Caco-2 (cell line): ENCODE measurements at regions of chr3 and their contacts with region 1.

Region 1: DNA sequence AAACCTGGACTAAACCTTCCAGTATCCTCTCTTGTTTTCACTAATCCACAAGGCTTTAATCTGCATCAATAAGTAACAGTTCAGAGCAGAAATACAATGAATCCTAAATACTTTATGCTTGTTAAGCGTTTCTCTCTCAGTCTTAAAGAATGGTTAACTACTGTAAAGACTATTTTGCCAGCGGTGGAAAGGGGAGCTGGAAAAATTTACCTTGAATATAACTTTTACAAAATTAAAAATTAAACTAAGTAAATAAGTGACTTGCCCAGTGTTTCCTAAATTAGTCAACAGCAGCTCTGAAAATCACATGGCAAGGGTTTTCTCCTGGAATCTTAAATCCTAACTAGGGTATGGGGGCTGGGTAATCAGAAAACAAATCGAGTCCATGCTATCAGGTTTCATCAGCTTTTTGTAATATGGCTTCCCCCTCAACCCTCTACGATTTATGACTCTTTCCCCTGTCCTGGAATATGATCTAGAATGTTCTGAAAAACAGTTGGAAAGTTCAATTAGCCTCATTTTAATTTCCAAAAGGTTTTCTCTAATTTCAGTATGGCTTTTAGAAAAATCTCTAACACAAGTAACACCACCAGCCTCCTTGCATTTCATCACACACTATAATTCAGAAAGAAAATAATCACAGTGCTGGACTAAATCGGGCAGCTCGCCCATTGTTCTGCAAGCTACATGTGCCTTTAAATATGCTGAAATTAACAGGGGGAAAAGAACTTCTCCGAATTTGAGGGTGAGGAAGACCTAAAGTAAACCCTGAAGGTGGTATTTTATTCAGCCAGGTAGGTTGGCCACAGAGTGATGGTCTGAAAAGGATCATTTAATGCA is 133.5 kb downstream of the ADAMTS9 start:
- DNase-seq: no peak
- H3K4me3 ChIP-seq: no peak overlapping the region
- H3K4me3 Mint-ChIP-seq: no peak overlapping the region
- H3K27ac Mint-ChIP-seq: no peak overlapping the region
- H3K4me1 ChIP-seq: peaks cover 29% of the 10 kb centered on the region
- H3K4me1 Mint-ChIP-seq: peaks cover 23% of the 10 kb centered on the region
- H3K27me3 ChIP-seq: no peaks in the 10 kb centered on the region
- H3K27me3 Mint-ChIP-seq: peaks cover 3% of the 10 kb centered on the region
- CTCF ChIP-seq: no peak

Region 2: DNA sequence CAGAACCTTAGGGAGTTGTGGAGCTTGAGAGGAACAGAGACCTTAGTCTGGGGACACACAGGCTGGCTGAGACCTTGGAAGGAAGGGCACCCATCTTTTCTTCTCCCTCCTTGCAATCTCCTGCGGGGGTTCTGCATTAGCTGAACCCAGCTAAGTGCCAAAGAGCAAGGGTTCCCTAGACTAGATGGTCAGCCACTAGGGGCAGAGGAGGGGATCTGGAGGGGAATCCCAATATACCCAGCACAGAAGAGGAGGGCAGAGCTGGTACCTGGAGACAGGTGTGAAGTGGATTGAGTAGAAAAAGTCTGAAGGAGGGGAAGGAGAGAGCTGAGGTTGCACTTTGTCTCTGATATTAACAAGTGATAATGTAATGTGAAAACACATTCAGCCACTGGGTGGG is 79.3 kb before region 1 on chr3:
- CTCF ChIA-PET with region 1: no interaction called
- POLR2A ChIA-PET with region 1: no interaction called
- intact Hi-C with region 1: no loop called
- DNase-seq: no peak
- H3K4me3 ChIP-seq: no peak overlapping the region
- H3K4me3 Mint-ChIP-seq: no peak overlapping the region
- H3K27ac Mint-ChIP-seq: no peak overlapping the region
- H3K4me1 ChIP-seq: no peaks in the 10 kb centered on the region
- H3K4me1 Mint-ChIP-seq: no peaks in the 10 kb centered on the region
- H3K27me3 ChIP-seq: no peaks in the 10 kb centered on the region
- H3K27me3 Mint-ChIP-seq: peaks cover 3% of the 10 kb centered on the region
- CTCF ChIP-seq: no peak

Region 3: GRCh38 chr3:64501298-64501906 is 52.9 kb before region 1 on chr3:
- CTCF ChIA-PET with region 1: no interaction called
- POLR2A ChIA-PET with region 1: no interaction called
- intact Hi-C with region 1: loop called (anchors 1 kb)
- DNase-seq: peak; percentile 67 to 71
- H3K4me3 ChIP-seq: no peak overlapping the region
- H3K4me3 Mint-ChIP-seq: peak overlapping the region; percentile 22
- H3K27ac Mint-ChIP-seq: no peak overlapping the region
- H3K4me1 ChIP-seq: peaks cover 24% of the 10 kb centered on the region
- H3K4me1 Mint-ChIP-seq: peaks cover 24% of the 10 kb centered on the region
- H3K27me3 ChIP-seq: no peaks in the 10 kb centered on the region
- H3K27me3 Mint-ChIP-seq: peaks cover 8% of the 10 kb centered on the region
- CTCF ChIP-seq: no peak

Region 4: DNA sequence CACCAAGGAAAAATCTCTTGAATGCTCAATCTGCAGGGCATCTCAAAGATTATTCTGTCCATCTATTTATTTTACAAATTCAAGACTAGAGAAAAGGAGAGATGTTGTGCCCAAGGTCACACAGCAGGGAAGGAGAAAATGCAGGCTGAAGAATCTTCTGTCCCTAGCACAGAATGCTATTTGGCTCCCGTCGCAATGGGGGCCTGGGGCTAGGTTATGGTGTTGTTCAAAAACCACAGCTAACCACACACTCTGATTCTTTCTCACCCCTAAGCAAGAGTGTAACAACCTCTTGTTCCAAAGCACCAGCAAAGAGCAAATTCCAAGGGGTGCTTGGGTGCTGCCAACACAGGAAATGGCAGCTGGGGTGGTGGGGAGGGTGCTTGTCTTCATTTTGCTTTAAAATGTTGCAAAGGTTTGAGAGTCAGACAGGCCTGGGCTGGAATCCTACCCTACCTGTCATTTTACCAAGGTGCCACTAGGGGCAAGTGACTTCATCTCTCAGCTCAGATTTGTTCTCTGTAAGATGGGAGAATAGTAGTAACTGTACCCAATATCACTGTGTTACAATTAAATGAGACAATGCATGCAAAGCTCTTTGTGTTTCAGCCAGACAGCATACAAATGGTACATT is 21.0 kb after region 1 on chr3:
- CTCF ChIA-PET with region 1: no interaction called
- POLR2A ChIA-PET with region 1: no interaction called
- intact Hi-C with region 1: loop called (anchors 1 kb)
- DNase-seq: peak in 1 of 2 experiments; percentile 22
- H3K4me3 ChIP-seq: no peak overlapping the region
- H3K4me3 Mint-ChIP-seq: no peak overlapping the region
- H3K27ac Mint-ChIP-seq: no peak overlapping the region
- H3K4me1 ChIP-seq: peaks cover 19% of the 10 kb centered on the region
- H3K4me1 Mint-ChIP-seq: peaks cover 14% of the 10 kb centered on the region
- H3K27me3 ChIP-seq: no peaks in the 10 kb centered on the region
- H3K27me3 Mint-ChIP-seq: no peaks in the 10 kb centered on the region
- CTCF ChIP-seq: peak; percentile 52 to 63

Region 5: GRCh38 chr3:64595253-64595694 is 41.0 kb after region 1 on chr3:
- CTCF ChIA-PET with region 1: no interaction called
- POLR2A ChIA-PET with region 1: no interaction called
- intact Hi-C with region 1: no loop called
- DNase-seq: no peak
- H3K4me3 ChIP-seq: no peak overlapping the region
- H3K4me3 Mint-ChIP-seq: no peak overlapping the region
- H3K27ac Mint-ChIP-seq: no peak overlapping the region
- H3K4me1 ChIP-seq: no peaks in the 10 kb centered on the region
- H3K4me1 Mint-ChIP-seq: no peaks in the 10 kb centered on the region
- H3K27me3 ChIP-seq: no peaks in the 10 kb centered on the region
- H3K27me3 Mint-ChIP-seq: no peaks in the 10 kb centered on the region
- CTCF ChIP-seq: no peak

Region 6: GRCh38 chr3:64612082-64612860 is 58.0 kb after region 1 on chr3:
- CTCF ChIA-PET with region 1: interaction called, 3 read pairs
- POLR2A ChIA-PET with region 1: no interaction called
- intact Hi-C with region 1: loop called (anchors 1 kb)
- DNase-seq: peak; percentile 37 to 50
- H3K4me3 ChIP-seq: no peak overlapping the region
- H3K4me3 Mint-ChIP-seq: peak overlapping the region; percentile 68
- H3K27ac Mint-ChIP-seq: peak overlapping the region; percentile 90
- H3K4me1 ChIP-seq: peaks cover 27% of the 10 kb centered on the region
- H3K4me1 Mint-ChIP-seq: peaks cover 20% of the 10 kb centered on the region
- H3K27me3 ChIP-seq: no peaks in the 10 kb centered on the region; the same call in 1 of the 2 replicates
- H3K27me3 Mint-ChIP-seq: no peaks in the 10 kb centered on the region
- CTCF ChIP-seq: no peak

Region 7: DNA sequence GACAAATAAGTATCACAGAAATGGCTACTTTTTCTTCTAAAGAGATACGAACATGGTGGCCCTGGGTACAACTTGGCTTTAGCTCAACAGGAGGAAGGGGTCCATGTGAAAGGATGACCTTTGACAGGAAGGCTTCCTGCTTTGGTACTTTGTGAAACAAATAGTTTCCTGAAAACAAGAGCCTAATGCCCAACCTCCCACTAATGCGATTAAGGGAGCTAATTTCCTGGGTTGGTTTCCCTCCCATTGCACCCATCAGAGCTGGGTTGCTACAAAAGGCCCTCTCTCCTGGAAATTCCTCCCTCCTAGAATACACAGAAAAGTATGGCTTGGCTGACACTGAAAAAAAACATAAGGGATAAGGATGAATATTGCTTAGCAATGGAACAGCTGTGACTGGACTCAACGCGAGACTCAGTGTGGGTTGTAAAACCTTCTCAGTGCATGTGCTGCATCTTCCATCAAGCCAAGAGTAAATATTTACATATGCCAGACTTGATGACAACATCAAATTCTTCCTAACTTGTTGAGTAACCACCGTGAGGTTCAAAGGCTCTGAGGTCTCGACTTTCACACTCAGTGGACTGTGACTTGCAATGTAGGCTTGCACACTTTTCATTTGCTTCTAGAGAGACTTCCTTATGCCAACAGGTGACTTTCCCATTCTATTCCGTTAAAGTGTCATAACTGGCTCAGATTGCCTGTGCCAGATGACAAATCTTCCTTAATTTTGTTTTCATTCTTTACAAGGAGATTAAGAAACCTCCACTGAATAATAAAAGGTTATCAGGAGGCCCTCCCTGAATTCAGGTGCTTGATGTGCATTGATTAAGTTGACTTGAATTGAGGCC is 73.4 kb after region 1 on chr3:
- CTCF ChIA-PET with region 1: interaction called, 3 read pairs
- POLR2A ChIA-PET with region 1: no interaction called
- intact Hi-C with region 1: loop called (anchors 1 kb)
- DNase-seq: peak; percentile 74 to 77
- H3K4me3 ChIP-seq: no peak overlapping the region
- H3K4me3 Mint-ChIP-seq: no peak overlapping the region
- H3K27ac Mint-ChIP-seq: peak overlapping the region; percentile 51
- H3K4me1 ChIP-seq: peaks cover 40% of the 10 kb centered on the region
- H3K4me1 Mint-ChIP-seq: peaks cover 31% of the 10 kb centered on the region
- H3K27me3 ChIP-seq: no peaks in the 10 kb centered on the region
- H3K27me3 Mint-ChIP-seq: no peaks in the 10 kb centered on the region
- CTCF ChIP-seq: no peak

Region 8: DNA sequence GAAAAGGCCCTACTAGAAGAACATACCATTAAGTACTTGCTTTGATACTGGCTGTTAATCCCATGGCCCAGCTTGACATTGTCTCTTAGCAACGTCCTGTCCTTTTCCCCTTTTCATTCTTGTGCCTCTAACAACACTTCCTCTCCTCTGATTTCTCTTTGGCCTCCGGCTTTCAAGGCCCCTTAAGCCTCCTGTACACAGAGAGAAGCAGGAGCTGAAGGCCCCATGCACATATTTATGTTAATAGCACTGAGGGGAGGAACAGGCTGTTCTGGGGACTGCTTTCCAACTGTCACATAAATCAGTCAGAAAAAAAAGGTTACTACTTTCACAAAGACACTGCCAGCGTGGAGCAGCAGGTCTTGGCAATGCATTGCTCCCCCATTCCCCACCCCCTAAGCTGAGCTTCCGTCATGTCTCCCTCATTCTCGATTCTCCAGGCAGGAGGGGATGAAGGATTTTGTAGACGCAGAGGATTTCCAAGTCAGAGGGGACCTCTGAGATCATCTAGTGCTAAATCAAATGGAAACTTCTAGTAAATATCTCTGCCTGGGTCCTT is 390.9 kb after region 1 on chr3:
- CTCF ChIA-PET with region 1: no interaction called
- POLR2A ChIA-PET with region 1: no interaction called
- intact Hi-C with region 1: loop called (anchors 2 kb)
- DNase-seq: peak; percentile 84 to 87
- H3K4me3 ChIP-seq: no peak overlapping the region
- H3K4me3 Mint-ChIP-seq: peak overlapping the region; percentile 25
- H3K27ac Mint-ChIP-seq: peak overlapping the region; percentile 10
- H3K4me1 ChIP-seq: peaks cover 25% of the 10 kb centered on the region
- H3K4me1 Mint-ChIP-seq: peaks cover 13% of the 10 kb centered on the region
- H3K27me3 ChIP-seq: no peaks in the 10 kb centered on the region
- H3K27me3 Mint-ChIP-seq: no peaks in the 10 kb centered on the region
- CTCF ChIP-seq: no peak